ENCODE measurements at regions of chr11 and their contacts with region 1.

Region 1: DNA sequence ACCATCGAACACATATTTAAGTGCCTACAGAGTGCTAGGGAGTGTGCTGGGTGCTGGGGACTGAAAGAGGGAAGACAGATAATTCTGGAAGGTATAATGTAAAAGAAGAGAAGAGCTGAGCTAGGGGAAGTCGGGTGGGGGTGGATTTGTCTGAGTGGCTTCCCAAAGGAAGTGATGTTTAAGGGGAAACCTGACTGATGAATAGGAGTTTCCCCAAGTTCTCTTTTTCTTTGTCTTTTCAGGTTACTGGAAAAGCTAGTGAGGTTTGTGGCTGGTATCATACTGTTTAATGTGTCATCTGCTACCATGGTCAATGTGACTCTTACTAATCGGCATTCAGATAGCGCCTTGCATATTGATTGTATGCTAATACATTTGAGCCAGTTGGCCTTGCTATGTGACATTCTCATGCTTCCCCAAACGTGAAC is 151.6 kb upstream of the MTMR2 start:
- DNase-seq: peak; percentile 74
- ATAC-seq: peak; percentile 93
- H3K4me3 ChIP-seq: 0 out of 2 replicates have a peak overlapping the region, but pooled peaks have one; percentile 30
- H3K27ac ChIP-seq: peak overlapping the region; percentile 62
- H3K4me1 ChIP-seq: peaks cover 27% of the 10 kb centered on the region
- H3K27me3 ChIP-seq: no peaks in the 10 kb centered on the region
- CTCF ChIP-seq: no peak
- EP300 ChIP-seq: peak; percentile 17 to 36; a peak in 1 of 4 replicates
- POLR2A ChIP-seq: no peak
- RAD21 ChIP-seq: no peak

Region 2: GRCh38 chr11:95778699-95779098 is 296.8 kb before region 1 on chr11:
- CTCF ChIA-PET with region 1: no interaction called
- POLR2A ChIA-PET with region 1: no interaction called
- RAD21 ChIA-PET with region 1: no interaction called
- SMC1A ChIA-PET with region 1: no interaction called
- in situ Hi-C with region 1: no loop called
- intact Hi-C with region 1: no loop called
- DNase-seq: no peak
- ATAC-seq: peak; percentile 77
- H3K4me3 ChIP-seq: no peak overlapping the region
- H3K27ac ChIP-seq: no peak overlapping the region
- H3K4me1 ChIP-seq: peaks cover 6% of the 10 kb centered on the region; the same call in 1 of the 2 replicates
- H3K27me3 ChIP-seq: no peaks in the 10 kb centered on the region
- CTCF ChIP-seq: no peak
- EP300 ChIP-seq: no peak
- POLR2A ChIP-seq: no peak
- RAD21 ChIP-seq: no peak

Region 3: DNA sequence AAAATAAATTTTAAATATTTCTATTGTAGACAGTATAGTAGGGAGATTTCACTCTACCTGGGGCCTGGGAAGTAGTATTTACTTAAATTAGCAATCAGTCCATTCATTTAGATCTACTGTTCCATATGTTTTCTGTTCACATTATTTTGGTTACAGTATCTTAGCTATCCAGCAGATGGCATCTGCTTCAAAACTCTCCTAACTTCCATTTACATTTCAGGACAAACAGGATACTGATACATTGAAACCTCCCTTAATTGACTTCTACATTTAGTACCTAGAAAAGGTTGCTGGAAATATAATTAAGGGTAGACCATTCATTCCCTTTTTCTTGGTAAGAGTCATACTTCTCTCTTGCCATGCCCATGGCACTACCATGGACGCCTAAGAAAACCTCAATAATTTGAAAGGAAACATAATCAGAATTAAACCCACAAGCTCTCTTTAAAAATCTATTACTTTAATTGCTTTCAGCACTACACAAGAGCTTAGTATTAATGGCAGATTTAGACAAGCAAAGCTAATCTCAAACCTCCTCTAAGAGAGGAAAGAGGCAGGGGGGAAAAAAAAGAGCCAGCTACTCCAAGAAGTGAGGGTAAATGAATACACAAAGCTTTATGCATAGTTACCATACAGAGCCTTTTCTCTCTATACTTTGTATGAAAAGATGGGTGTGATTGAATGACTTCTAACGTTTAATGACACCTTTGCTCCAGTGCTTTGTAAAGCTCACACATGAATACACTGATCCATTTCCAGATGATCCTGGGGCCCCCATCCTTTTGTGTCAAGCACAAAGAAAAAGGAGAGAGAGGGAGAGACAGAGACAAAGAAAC is 20.5 kb before region 1 on chr11:
- CTCF ChIA-PET with region 1: interaction called, 26 read pairs
- POLR2A ChIA-PET with region 1: interaction called, 6 read pairs
- RAD21 ChIA-PET with region 1: interaction called, 22 read pairs
- SMC1A ChIA-PET with region 1: interaction called, 15 read pairs
- in situ Hi-C with region 1: no loop called
- intact Hi-C with region 1: no loop called
- DNase-seq: no peak
- ATAC-seq: no peak
- H3K4me3 ChIP-seq: no peak overlapping the region
- H3K27ac ChIP-seq: no peak overlapping the region
- H3K4me1 ChIP-seq: peaks cover 27% of the 10 kb centered on the region
- H3K27me3 ChIP-seq: no peaks in the 10 kb centered on the region
- CTCF ChIP-seq: peak; percentile 46 to 58 (median 48)
- EP300 ChIP-seq: no peak
- POLR2A ChIP-seq: no peak
- RAD21 ChIP-seq: peak; percentile 63

Region 4: GRCh38 chr11:96062134-96062533 is 13.4 kb before region 1 on chr11:
- CTCF ChIA-PET with region 1: interaction called, 7 read pairs
- POLR2A ChIA-PET with region 1: interaction called, 4 read pairs
- RAD21 ChIA-PET with region 1: interaction called, 11 read pairs
- SMC1A ChIA-PET with region 1: interaction called, 15 read pairs
- in situ Hi-C with region 1: no loop called
- intact Hi-C with region 1: no loop called
- DNase-seq: no peak
- ATAC-seq: peak; percentile 88
- H3K4me3 ChIP-seq: no peak overlapping the region
- H3K27ac ChIP-seq: no peak overlapping the region
- H3K4me1 ChIP-seq: no peaks in the 10 kb centered on the region
- H3K27me3 ChIP-seq: no peaks in the 10 kb centered on the region
- CTCF ChIP-seq: no peak
- EP300 ChIP-seq: no peak
- POLR2A ChIP-seq: no peak
- RAD21 ChIP-seq: no peak

Region 5: DNA sequence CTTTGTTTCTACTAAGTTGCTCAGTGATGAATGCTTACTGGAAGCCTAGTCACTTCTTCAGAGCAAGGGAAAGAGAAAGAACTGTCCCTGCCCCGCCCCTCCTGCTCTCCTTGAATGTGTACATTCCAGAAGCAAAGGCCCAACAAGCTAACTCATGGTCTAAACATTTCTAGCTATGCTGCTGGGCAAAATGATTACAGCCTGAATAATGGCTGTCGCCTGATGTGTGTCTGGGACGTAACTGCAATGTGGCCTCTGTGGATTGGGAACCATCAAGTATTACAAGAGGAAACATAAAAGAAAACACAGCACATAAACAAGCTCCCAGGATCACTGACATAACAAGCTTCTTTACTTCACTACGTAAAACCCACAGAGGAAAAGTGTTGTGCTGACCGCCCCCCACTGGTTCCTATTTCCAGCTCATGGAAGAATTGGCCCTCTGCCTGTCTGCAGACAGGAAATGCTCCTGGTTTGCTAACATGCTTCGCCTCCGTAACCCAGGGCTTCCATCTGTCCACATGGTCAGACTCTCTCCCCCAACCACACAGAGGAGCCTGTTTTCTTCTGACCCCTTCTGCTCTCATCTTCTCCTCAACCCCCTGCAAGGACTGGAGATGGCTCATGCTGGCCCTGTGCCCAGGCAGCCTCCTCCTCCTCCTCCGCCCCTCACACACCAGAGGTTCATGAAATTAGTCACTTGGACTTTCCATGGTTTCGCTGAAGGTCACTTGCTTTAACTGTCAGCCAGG is 80.3 kb after region 1 on chr11:
- CTCF ChIA-PET with region 1: no interaction called
- POLR2A ChIA-PET with region 1: no interaction called
- RAD21 ChIA-PET with region 1: no interaction called
- SMC1A ChIA-PET with region 1: interaction called, 3 read pairs
- in situ Hi-C with region 1: no loop called
- intact Hi-C with region 1: loop called (anchors 1 kb)
- DNase-seq: peak; percentile 76
- ATAC-seq: peak; percentile 89
- H3K4me3 ChIP-seq: 0 out of 2 replicates have a peak overlapping the region, but pooled peaks have one; percentile 2
- H3K27ac ChIP-seq: peak overlapping the region; percentile 87
- H3K4me1 ChIP-seq: peaks cover 37% of the 10 kb centered on the region
- H3K27me3 ChIP-seq: no peaks in the 10 kb centered on the region
- CTCF ChIP-seq: peak in 2 of 3 experiments; percentile 17 to 19; a peak in 3 of 6 replicates
- EP300 ChIP-seq: peak in 1 of 2 experiments; percentile 82; a peak in 3 of 4 replicates
- POLR2A ChIP-seq: no peak
- RAD21 ChIP-seq: peak; percentile 18

Region 6: DNA sequence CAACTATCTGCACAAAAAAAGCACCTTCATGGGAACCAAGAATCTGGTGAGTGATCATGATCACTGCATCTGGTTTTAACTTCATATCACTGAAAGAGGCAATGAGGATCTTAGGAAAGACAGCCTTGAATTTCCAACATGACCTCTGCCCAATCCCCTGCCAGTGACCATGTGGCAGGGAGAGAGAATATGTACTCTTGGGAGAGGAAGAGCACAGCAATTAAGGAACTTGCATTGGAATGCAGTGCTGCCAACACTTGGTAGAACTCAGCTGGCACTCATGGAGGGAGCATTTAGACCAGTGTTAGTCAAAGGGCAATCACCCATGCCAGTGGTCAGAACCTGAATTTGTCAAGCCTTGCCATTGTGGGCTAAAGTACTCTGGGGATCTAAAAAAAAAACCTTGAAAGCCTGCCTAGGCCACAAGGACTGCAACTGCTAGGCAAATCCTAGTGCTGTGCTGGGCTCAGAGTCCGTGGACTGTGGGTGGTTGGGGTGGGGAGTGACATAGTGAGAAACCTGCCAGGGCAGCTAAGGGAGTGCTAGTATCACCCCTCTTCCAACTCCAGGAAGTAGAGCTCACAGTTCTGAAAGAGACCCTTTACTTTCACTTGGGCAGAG is 337.3 kb after region 1 on chr11:
- CTCF ChIA-PET with region 1: no interaction called
- POLR2A ChIA-PET with region 1: no interaction called
- RAD21 ChIA-PET with region 1: no interaction called
- SMC1A ChIA-PET with region 1: no interaction called
- in situ Hi-C with region 1: no loop called
- intact Hi-C with region 1: no loop called
- DNase-seq: no peak
- ATAC-seq: peak; percentile 78
- H3K4me3 ChIP-seq: no peak overlapping the region
- H3K27ac ChIP-seq: no peak overlapping the region
- H3K4me1 ChIP-seq: no peaks in the 10 kb centered on the region
- H3K27me3 ChIP-seq: no peaks in the 10 kb centered on the region
- CTCF ChIP-seq: no peak
- EP300 ChIP-seq: no peak
- POLR2A ChIP-seq: no peak
- RAD21 ChIP-seq: no peak